Activated CD4-positive, alpha-beta T cell treated with anti-CD3 and anti-CD28 coated beads, Interleukin-2, amount 10 ng/mL, durations not matched to agents 24 days and 14 days (primary cell): ENCODE measurements at regions of chr3 and their contacts with region 1.

Region 1: GRCh38 chr3:129942296-129942695 is 32.2 kb upstream of the TRH start:
- DNase-seq: peak; percentile 78
- H3K4me3 Mint-ChIP-seq: no peak overlapping the region
- H3K27ac Mint-ChIP-seq: no peak overlapping the region
- H3K4me1 Mint-ChIP-seq: peaks cover 2% of the 10 kb centered on the region
- H3K27me3 Mint-ChIP-seq: peaks cover 3% of the 10 kb centered on the region

Region 2: GRCh38 chr3:129503471-129504291 is 438.6 kb before region 1 on chr3:
- intact Hi-C with region 1: no loop called
- DNase-seq: no peak
- H3K4me3 Mint-ChIP-seq: no peak overlapping the region
- H3K27ac Mint-ChIP-seq: no peak overlapping the region
- H3K4me1 Mint-ChIP-seq: no peaks in the 10 kb centered on the region
- H3K27me3 Mint-ChIP-seq: no peaks in the 10 kb centered on the region

Region 3: GRCh38 chr3:130014526-130014925 is 72.2 kb after region 1 on chr3:
- intact Hi-C with region 1: loop called (anchors 10 kb)
- DNase-seq: no peak
- H3K4me3 Mint-ChIP-seq: no peak overlapping the region
- H3K27ac Mint-ChIP-seq: no peak overlapping the region
- H3K4me1 Mint-ChIP-seq: no peaks in the 10 kb centered on the region
- H3K27me3 Mint-ChIP-seq: peaks cover 2% of the 10 kb centered on the region